ENCODE measurements at regions of chr15 and their contacts with region 1.

Region 1: GRCh38 chr15:42065033-42065432 is 29.3 kb downstream of the PLA2G4D start:
- DNase-seq: no peak
- ATAC-seq: no peak
- H3K4me3 ChIP-seq: no peak overlapping the region
- H3K27ac ChIP-seq: no peak overlapping the region
- H3K4me1 ChIP-seq: peaks cover 0 to 11% of the 10 kb centered on the region in 2 experiments; a peak in 2 of 4 replicates
- H3K27me3 ChIP-seq: no peaks in the 10 kb centered on the region
- CTCF ChIP-seq: no peak
- POLR2A ChIP-seq: no peak
- RAD21 ChIP-seq: no peak

Region 2: GRCh38 chr15:42137431-42138261 is 72.6 kb after region 1 on chr15:
- CTCF ChIA-PET with region 1: interaction called, 7 read pairs
- POLR2A ChIA-PET with region 1: no interaction called
- RAD21 ChIA-PET with region 1: no interaction called
- intact Hi-C with region 1: loop called (anchors 1 kb)
- DNase-seq: peak; percentile 57
- ATAC-seq: peak; percentile 70
- H3K4me3 ChIP-seq: no peak overlapping the region
- H3K27ac ChIP-seq: no peak overlapping the region
- H3K4me1 ChIP-seq: peaks cover 5 to 8% of the 10 kb centered on the region in 2 experiments; a peak in 3 of 4 replicates
- H3K27me3 ChIP-seq: no peaks in the 10 kb centered on the region; the same call in 1 of the 2 replicates
- CTCF ChIP-seq: peak; percentile 58 to 94 (median 71)
- POLR2A ChIP-seq: no peak
- RAD21 ChIP-seq: peak; percentile 80

Region 3: GRCh38 chr15:42385206-42385979 is 320.4 kb after region 1 on chr15:
- CTCF ChIA-PET with region 1: interaction called, 3 read pairs
- POLR2A ChIA-PET with region 1: no interaction called
- RAD21 ChIA-PET with region 1: no interaction called
- intact Hi-C with region 1: loop called (anchors 5 kb)
- DNase-seq: peak; percentile 35
- ATAC-seq: peak; percentile 95
- H3K4me3 ChIP-seq: no peak overlapping the region
- H3K27ac ChIP-seq: no peak overlapping the region
- H3K4me1 ChIP-seq: no peaks in the 10 kb centered on the region
- H3K27me3 ChIP-seq: no peaks in the 10 kb centered on the region
- CTCF ChIP-seq: peak; percentile 46 to 92 (median 89); a peak in 5 of 6 replicates
- POLR2A ChIP-seq: no peak
- RAD21 ChIP-seq: peak; percentile 76

Region 4: GRCh38 chr15:42474827-42475226 is 409.8 kb after region 1 on chr15:
- CTCF ChIA-PET with region 1: no interaction called
- POLR2A ChIA-PET with region 1: no interaction called
- RAD21 ChIA-PET with region 1: no interaction called
- intact Hi-C with region 1: loop called (anchors 2 kb)
- DNase-seq: no peak
- ATAC-seq: no peak
- H3K4me3 ChIP-seq: no peak overlapping the region
- H3K27ac ChIP-seq: no peak overlapping the region
- H3K4me1 ChIP-seq: no peaks in the 10 kb centered on the region
- H3K27me3 ChIP-seq: no peaks in the 10 kb centered on the region
- CTCF ChIP-seq: no peak
- POLR2A ChIP-seq: no peak
- RAD21 ChIP-seq: no peak

Region 5: DNA sequence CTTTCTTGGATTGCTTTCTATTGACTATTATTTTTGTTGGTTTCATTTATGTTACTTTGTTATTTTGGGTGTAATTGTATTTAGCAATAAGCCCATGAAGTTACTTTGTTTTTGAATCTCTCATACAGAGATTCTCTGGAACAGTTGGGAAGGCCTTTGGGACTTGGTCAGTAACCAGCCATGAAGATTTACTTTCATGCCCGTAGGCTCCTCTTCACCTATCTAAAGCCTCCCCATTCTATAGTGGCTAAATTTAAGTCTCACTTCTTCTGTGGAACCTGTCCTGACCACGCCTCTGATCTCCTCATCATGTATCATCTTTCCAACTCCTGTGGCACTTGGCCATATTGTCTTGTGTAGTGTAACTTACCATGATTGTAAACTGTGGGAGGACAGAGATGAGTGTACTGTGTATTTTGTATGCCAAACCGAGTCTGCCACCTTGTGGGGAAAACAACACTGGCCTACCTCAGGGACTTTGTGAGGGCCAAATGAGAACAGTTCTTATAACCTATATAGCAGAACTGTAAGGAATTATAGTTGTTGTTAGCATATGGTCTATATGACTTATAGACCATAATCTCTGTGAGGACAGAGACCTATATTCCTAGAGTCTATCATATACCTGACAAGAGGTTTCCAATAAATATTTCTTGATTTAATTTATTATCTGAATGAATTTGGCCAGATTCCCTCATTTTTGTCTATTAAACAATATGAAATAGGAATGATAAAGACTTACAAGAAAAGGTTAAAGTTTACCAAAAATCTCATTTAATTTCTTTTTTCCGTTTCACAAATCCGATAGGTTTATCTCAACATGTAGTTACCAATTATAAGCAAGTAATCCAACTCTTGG is 585.4 kb after region 1 on chr15:
- CTCF ChIA-PET with region 1: interaction called, 3 read pairs
- POLR2A ChIA-PET with region 1: no interaction called
- RAD21 ChIA-PET with region 1: no interaction called
- intact Hi-C with region 1: loop called (anchors 1 kb)
- DNase-seq: peak; percentile 61
- ATAC-seq: peak; percentile 100
- H3K4me3 ChIP-seq: no peak overlapping the region
- H3K27ac ChIP-seq: no peak overlapping the region
- H3K4me1 ChIP-seq: no peaks in the 10 kb centered on the region
- H3K27me3 ChIP-seq: no peaks in the 10 kb centered on the region
- CTCF ChIP-seq: peak; percentile 69 to 85 (median 82)
- POLR2A ChIP-seq: no peak
- RAD21 ChIP-seq: peak; percentile 86

Measured in HCT116 (cell line).